ENCODE measurements at regions of chr9 and their contacts with region 1.

Region 1: DNA sequence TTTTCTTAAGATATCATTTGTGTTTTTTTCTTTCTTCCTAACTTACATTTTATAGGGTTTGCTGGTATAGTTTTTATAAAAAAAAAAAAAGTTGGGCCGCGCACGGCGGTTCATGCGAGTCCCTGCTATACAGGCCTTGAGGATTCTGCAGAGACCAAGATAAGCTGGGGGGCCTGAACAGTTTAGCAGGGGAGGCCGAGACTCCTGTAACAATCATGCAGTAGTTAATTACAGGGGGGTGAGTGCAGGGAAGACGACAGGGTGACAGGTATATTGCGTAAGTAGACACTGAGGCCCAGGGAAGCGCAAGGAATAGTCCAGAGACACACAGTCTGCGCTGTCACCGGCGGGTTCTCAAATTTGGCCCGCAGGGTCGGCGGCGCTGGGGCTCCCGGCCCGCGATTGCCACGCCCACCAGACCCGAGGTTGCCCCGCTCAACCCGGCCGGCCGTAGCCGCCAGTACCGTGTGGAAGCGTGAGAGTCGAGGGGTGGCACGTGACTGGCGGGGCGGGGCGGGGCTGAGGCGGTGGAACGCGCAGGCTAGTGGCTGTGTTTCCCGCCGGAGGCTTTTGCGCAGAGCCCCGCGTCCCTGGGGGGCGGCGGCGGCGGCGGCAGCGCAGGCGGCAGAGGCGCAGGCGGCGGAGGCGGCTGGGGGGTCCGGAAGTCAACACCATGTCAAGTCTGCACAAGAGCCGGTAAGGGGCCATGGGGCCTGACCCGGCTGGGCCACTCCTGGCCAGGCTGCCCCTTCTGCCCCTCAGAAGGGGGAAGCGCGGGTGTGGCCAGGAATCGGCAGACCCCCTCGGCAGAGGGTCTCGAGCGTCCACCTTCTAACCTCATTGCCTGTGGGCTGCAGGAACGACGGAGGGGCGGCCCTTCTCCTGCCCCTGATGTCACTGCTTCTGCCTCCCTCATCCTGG is at the start of gene TBC1D13:
- DNase-seq: peak; percentile 43 to 96
- H3K4me3 ChIP-seq: peak within 1 kb of the TSS; percentile 84 to 98 (median 88)
- H3K27ac ChIP-seq: peak within 1 kb of the TSS; percentile 51; the same call in 1 of the 2 replicates
- H3K4me1 ChIP-seq: peaks cover 0 to 2% (median 0%) of the 10 kb centered on the region in 4 experiments; a peak in 1 of 7 replicates
- H3K27me3 ChIP-seq: no peaks in the 10 kb centered on the region
- CTCF ChIP-seq: no peak
- EP300 ChIP-seq: peak in 1 of 2 experiments; percentile 97; a peak in 2 of 3 replicates
- POLR2A ChIP-seq: peak in 1 of 2 experiments; percentile 56; a peak in 2 of 3 replicates
- RAD21 ChIP-seq: peak in 1 of 2 experiments; percentile 17; a peak in 1 of 4 replicates
- total RNA-seq, gene TBC1D13: 21.3 and 26.3 TPM in 2 replicates

Region 2: GRCh38 chr9:128771745-128772519 is 15.0 kb before region 1 on chr9 and contains the start of gene ZER1:
- CTCF ChIA-PET with region 1: interaction called, 15 read pairs
- POLR2A ChIA-PET with region 1: interaction called, 9 read pairs
- DNase-seq: peak; percentile 53 to 97
- H3K4me3 ChIP-seq: peak within 1 kb of the TSS; percentile 75 to 97 (median 90)
- H3K27ac ChIP-seq: peak within 1 kb of the TSS; percentile 85
- H3K4me1 ChIP-seq: peaks cover 0 to 3% (median 1%) of the 10 kb centered on the region in 4 experiments; a peak in 3 of 7 replicates
- H3K27me3 ChIP-seq: no peaks in the 10 kb centered on the region
- CTCF ChIP-seq: no peak
- EP300 ChIP-seq: peak in 1 of 2 experiments; percentile 87; a peak in 1 of 3 replicates
- POLR2A ChIP-seq: peak in 1 of 2 experiments; percentile 79; a peak in 2 of 3 replicates
- RAD21 ChIP-seq: peak in 1 of 2 experiments; percentile 7; a peak in 1 of 4 replicates
- total RNA-seq, gene ZER1: 20.5 and 22.6 TPM in 2 replicates

Measured in H1 (cell line).